Activated naive CD4-positive, alpha-beta T cell treated with anti-CD3 and anti-CD28 coated beads for 36 hours (primary cell): ENCODE measurements at regions of chr19 and their contacts with region 1.

Region 1: DNA sequence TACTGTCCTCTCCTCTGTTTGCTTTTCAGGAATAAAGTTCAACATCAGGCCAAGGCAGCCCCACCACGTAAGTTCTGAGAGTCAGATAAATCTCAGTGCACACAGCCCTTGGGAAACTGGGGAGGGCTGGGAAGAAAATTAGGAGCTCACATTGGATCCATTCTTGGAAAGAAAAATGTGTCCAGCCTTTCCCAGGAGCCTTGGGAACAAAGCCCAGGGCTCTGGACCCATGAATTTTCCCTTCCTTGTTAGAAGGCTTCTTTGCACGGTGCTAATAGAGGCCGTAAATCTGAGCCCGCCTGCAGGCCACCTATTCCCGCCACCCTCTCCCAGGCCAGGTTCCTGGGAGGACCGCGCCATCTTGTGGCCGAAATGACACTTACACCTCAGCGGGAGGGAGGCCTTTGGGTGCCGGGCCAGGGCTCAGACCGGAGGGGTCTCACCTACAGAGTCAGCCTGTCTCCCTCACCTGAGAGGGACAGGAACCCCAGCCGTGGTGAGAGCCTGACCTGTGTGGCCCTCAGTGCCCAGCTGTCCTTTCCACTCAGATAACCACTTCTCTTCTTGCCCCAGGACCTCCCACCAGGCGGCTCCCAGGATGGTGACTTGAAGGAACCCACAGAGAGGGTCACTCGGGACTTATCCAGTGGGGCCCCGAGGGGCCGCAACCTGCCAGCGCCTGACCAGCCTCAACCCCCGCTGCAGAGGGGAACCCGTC is 25.1 kb upstream of the KCTD15 start:
- DNase-seq: peak; percentile 80
- H3K4me3 Mint-ChIP-seq: no peak overlapping the region
- H3K27ac Mint-ChIP-seq: no peak overlapping the region
- H3K4me1 Mint-ChIP-seq: no peaks in the 10 kb centered on the region
- H3K27me3 Mint-ChIP-seq: peaks cover 10% of the 10 kb centered on the region

Region 2: GRCh38 chr19:33235269-33235995 is 536.1 kb before region 1 on chr19:
- CTCF ChIA-PET with region 1: interaction called, 3 read pairs
- intact Hi-C with region 1: loop called (anchors 2 kb)
- DNase-seq: peak; percentile 81
- H3K4me3 Mint-ChIP-seq: no peak overlapping the region
- H3K27ac Mint-ChIP-seq: no peak overlapping the region
- H3K4me1 Mint-ChIP-seq: no peaks in the 10 kb centered on the region
- H3K27me3 Mint-ChIP-seq: peaks cover 11% of the 10 kb centered on the region

Region 3: DNA sequence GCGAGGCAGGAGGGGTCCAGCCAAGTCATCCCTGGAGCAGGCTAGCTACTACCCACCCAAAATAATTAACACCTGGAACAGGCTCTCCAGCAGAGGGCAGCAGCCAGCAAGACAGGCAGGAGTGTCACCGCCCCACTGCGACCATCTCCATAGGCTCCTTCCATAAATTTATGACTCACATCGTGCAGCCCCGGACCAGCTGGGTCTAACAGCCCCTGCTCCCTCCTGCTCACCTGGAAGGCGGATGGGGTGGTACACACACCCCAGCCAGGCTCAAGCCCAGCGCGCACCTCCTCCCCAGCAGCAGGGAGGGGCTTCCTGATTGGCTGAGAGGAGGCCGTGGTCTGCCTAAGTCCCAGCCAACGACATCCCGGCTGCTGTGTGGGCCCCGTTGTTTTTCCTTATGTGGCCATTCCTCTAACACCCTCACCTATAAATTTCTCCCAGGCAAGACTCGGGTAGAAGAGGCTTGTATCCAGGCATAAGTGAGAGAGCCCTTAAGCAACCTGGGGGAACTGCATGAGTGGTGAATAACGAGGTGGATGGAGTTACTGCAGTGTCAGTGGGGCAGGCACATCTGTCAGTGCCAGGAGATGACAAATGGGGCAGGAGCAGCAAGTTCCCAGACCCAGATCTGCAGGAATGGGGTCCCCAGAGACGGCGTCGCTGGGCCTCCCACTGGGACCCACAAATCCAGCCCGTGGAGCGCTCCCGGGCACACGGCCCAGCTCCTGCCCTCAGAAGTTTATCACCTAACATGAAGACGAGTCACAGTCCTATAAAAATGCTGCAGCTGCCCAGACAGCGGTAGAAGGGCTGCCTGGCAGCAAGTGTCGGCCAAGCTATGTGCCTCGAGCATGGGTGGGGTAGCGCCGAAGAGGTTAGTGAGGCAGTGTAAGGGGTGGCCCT is 355.0 kb before region 1 on chr19:
- CTCF ChIA-PET with region 1: interaction called, 8 read pairs
- intact Hi-C with region 1: loop called (anchors 1 kb)
- DNase-seq: peak; percentile 83
- H3K4me3 Mint-ChIP-seq: peak overlapping the region; percentile 27
- H3K27ac Mint-ChIP-seq: no peak overlapping the region
- H3K4me1 Mint-ChIP-seq: peaks cover 4% of the 10 kb centered on the region
- H3K27me3 Mint-ChIP-seq: no peaks in the 10 kb centered on the region

Region 4: DNA sequence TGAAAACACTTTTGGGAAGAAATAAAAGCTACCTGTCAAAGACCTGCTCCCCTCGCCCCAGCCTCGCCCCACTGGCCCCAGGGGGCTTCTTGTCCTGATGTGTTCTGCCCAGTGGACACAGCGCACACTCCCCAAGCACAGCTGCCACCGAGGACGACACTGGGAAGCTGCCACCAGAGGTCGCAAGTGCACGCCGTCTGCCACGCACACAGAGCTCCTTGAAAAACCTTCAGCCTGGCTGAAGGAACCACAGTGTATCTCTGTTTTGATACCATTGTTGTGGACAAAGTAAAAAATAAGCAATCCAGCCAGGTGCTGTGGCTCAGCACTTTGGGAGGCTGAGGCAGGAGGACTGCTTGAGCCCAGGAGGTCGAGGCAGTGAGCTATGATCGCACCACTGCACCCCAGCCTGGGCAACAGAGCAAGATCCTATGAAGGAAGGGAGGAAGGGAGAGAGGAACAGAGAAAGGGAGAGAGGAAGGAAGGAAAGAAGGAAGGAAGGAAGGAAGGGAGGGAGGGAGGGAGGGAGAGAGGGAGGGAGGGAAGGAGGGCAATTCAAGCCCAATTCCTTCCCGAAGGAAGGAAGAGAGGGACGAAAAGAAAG is 340.8 kb before region 1 on chr19:
- CTCF ChIA-PET with region 1: interaction called, 7 read pairs
- intact Hi-C with region 1: loop called (anchors 1 kb)
- DNase-seq: peak; percentile 78
- H3K4me3 Mint-ChIP-seq: no peak overlapping the region
- H3K27ac Mint-ChIP-seq: peak overlapping the region; percentile 16
- H3K4me1 Mint-ChIP-seq: peaks cover 7% of the 10 kb centered on the region
- H3K27me3 Mint-ChIP-seq: no peaks in the 10 kb centered on the region

Region 5: GRCh38 chr19:34018546-34018945 is 247.0 kb after region 1 on chr19:
- CTCF ChIA-PET with region 1: no interaction called
- intact Hi-C with region 1: no loop called
- DNase-seq: no peak
- H3K4me3 Mint-ChIP-seq: no peak overlapping the region
- H3K27ac Mint-ChIP-seq: no peak overlapping the region
- H3K4me1 Mint-ChIP-seq: no peaks in the 10 kb centered on the region
- H3K27me3 Mint-ChIP-seq: peaks cover 26% of the 10 kb centered on the region